ENCODE measurements at regions of chr7 and their contacts with region 1.

Region 1: GRCh38 chr7:102440078-102440795 is 6.9 kb downstream of the ORAI2 start:
- DNase-seq: no peak
- ATAC-seq: no peak
- H3K4me3 ChIP-seq: no peak overlapping the region
- H3K4me3 Mint-ChIP-seq: no peak overlapping the region
- H3K27ac ChIP-seq: peak overlapping the region; percentile 90
- H3K27ac Mint-ChIP-seq: no peak overlapping the region
- H3K4me1 ChIP-seq: peaks cover 52 to 76% of the 10 kb centered on the region in 2 donors
- H3K4me1 Mint-ChIP-seq: peaks cover 54% of the 10 kb centered on the region
- H3K27me3 ChIP-seq: no peaks in the 10 kb centered on the region
- H3K27me3 Mint-ChIP-seq: no peaks in the 10 kb centered on the region
- CTCF ChIP-seq: no peak

Region 2: DNA sequence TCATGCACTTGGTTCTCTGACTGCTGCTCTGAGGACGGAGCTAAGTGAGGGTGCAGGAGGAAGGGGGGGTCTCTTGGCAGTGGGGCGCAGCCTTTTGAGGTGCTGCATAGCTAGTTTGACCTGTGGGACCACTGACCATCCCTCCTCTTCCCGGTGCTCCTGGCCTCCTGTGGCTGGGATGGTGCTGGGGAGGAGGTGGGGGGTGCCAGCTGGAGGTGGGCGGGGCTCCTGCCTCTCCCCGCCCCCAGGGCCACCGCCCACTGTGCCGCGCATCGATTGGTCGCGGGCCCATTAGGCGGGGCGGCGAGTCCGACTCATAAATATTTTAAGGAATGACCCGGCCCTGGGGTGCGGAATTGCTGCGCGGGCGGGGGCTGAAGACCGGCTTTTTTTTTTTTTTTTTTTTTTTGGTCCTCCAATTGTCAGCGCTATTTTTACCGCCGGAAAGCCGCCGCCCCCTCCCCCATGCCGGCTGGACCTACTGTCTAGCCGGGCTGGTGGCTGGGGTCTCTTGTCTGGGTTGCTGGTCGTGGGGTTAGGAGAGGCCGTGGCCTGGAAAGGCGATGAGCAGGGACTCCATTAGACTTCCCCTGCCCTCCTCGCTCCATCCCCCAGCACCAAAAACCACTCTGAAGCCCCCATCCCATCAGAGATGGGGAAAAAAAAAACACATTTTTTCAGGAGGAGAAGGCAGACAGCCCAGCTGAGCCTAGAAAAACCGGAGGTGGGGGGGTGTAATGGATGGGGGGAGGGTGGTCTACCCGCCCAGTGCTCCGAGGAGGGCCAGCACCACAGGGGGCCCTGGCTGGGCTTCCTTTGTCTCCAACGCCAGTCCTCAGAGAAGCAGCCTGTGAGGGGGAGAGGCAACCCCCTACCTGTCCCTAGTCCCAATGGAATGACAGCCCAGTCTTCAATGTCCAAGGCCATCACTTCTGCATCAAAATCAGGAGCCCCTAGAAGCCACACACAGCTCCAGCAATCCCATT is 147.1 kb before region 1 on chr7:
- CTCF ChIA-PET with region 1: no interaction called
- POLR2A ChIA-PET with region 1: interaction called, 11 read pairs
- intact Hi-C with region 1: no loop called
- DNase-seq: no peak
- ATAC-seq: no peak
- H3K4me3 ChIP-seq: peak overlapping the region in 1 of 5 experiments; percentile 29
- H3K4me3 Mint-ChIP-seq: no peak overlapping the region
- H3K27ac ChIP-seq: peak overlapping the region in 1 of 2 donors; percentile 56
- H3K27ac Mint-ChIP-seq: no peak overlapping the region
- H3K4me1 ChIP-seq: peaks cover 75 to 85% of the 10 kb centered on the region in 2 donors
- H3K4me1 Mint-ChIP-seq: peaks cover 88% of the 10 kb centered on the region
- H3K27me3 ChIP-seq: no peaks in the 10 kb centered on the region
- H3K27me3 Mint-ChIP-seq: no peaks in the 10 kb centered on the region
- CTCF ChIP-seq: no peak

Region 3: DNA sequence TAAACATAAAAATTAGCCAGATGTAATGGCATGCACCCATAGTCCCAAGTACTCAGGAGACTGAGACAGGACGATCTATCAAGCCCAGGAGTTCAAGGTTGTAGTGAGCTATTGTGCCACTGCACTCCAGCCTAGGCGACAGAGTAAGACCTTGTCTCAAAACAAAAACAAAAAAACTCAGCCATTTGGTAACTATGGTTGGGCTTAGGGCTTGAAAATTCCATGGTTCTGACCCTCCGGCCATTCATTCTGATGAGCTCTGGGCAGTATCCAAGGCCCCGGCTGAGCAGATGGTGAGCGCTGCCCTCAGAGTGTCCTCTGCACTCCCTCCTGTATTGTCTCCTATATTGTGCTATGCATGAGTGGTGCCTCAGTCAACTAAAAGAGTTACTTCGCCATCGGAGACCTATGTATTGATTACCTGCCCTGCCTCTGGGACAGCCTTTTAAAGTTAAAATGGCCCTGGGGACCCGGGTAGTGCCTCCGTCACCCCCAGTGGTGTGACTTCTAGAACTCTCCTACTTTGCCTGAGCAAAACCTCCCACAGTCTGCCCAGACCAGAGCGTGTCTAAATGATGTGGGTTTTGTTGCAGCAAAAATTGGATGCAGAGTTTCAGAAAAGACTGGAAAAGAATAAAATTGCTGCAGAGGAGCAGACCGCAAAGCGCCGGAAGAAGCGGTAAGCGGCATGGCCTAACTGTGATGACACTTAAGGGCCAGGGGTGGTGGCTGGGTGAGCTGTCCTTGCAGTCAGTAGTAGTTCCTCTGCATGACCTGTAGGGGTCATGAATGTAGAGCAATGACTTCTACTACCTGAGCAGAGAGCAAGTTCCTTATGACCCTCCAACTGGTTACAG is 36.0 kb before region 1 on chr7:
- CTCF ChIA-PET with region 1: interaction called, 1,182 read pairs
- POLR2A ChIA-PET with region 1: interaction called, 69 read pairs
- intact Hi-C with region 1: loop called (anchors 1 kb)
- DNase-seq: peak; percentile 81
- ATAC-seq: peak; percentile 86
- H3K4me3 ChIP-seq: no peak overlapping the region
- H3K4me3 Mint-ChIP-seq: no peak overlapping the region
- H3K27ac ChIP-seq: no peak overlapping the region
- H3K27ac Mint-ChIP-seq: no peak overlapping the region
- H3K4me1 ChIP-seq: peaks cover 20 to 28% of the 10 kb centered on the region in 2 donors
- H3K4me1 Mint-ChIP-seq: peaks cover 36% of the 10 kb centered on the region
- H3K27me3 ChIP-seq: no peaks in the 10 kb centered on the region
- H3K27me3 Mint-ChIP-seq: no peaks in the 10 kb centered on the region
- CTCF ChIP-seq: peak; percentile 87

Region 4: GRCh38 chr7:102412548-102412947 is 27.7 kb before region 1 on chr7:
- CTCF ChIA-PET with region 1: interaction called, 1,182 read pairs
- POLR2A ChIA-PET with region 1: interaction called, 223 read pairs
- intact Hi-C with region 1: loop called (anchors 1 kb)
- DNase-seq: peak; percentile 67
- ATAC-seq: no peak
- H3K4me3 ChIP-seq: no peak overlapping the region
- H3K4me3 Mint-ChIP-seq: no peak overlapping the region
- H3K27ac ChIP-seq: no peak overlapping the region
- H3K27ac Mint-ChIP-seq: peak overlapping the region; percentile 34
- H3K4me1 ChIP-seq: peaks cover 58 to 76% of the 10 kb centered on the region in 2 donors
- H3K4me1 Mint-ChIP-seq: peaks cover 77% of the 10 kb centered on the region
- H3K27me3 ChIP-seq: no peaks in the 10 kb centered on the region
- H3K27me3 Mint-ChIP-seq: no peaks in the 10 kb centered on the region
- CTCF ChIP-seq: peak; percentile 68

Region 5: GRCh38 chr7:102425639-102426267 is 14.5 kb before region 1 on chr7:
- CTCF ChIA-PET with region 1: interaction called, 1,182 read pairs
- POLR2A ChIA-PET with region 1: interaction called, 223 read pairs
- intact Hi-C with region 1: loop called (anchors 1 kb)
- DNase-seq: peak; percentile 95
- ATAC-seq: peak; percentile 76
- H3K4me3 ChIP-seq: peak overlapping the region; percentile 30 to 48 (median 39)
- H3K4me3 Mint-ChIP-seq: peak overlapping the region; percentile 87
- H3K27ac ChIP-seq: peak overlapping the region; percentile 100
- H3K27ac Mint-ChIP-seq: peak overlapping the region; percentile 100
- H3K4me1 ChIP-seq: peaks cover 94 to 99% of the 10 kb centered on the region in 2 donors
- H3K4me1 Mint-ChIP-seq: peaks cover 79% of the 10 kb centered on the region
- H3K27me3 ChIP-seq: no peaks in the 10 kb centered on the region
- H3K27me3 Mint-ChIP-seq: no peaks in the 10 kb centered on the region
- CTCF ChIP-seq: no peak

Region 6: DNA sequence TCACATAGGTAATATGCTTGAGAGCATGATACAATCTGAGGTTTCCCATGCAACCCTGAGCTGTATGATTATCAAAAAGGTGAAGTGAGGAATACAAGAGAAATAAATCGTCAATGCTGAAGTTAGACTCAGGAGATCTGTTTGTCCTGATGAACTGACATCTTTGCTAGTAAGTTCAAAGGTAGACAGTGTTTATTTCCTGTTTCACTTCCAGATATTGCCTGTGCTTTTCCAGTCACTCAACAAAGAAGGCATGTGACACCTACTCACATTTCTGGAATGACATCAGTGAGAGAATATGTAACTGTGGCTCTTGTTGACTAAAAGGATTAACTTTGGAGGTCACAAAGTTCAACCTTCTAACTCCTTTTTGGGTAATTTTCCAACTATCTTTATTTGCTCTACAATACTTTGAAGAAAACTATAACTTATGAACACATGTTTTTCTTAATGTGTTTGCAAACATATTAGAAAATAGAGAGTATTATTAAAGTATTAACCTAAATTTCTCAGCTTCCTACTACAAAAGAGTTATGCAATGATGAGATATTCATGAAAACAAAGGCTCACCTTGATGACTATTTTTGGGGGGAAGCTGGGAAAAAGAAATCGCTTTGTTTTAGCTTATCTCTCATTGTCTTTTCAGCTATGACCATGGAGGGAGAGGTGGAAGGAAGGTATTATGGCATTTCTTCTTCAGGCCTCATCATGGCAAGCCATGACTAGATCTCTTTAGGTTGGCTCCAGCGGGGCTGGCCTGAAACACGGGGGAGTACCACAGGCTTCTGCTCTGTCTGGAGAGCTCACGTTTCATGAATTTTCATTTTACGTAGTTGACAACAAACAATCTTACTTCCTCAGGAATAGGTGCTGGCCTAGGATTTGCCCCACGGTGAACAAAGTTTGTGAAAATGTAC is 1220.5 kb after region 1 on chr7:
- CTCF ChIA-PET with region 1: no interaction called
- POLR2A ChIA-PET with region 1: no interaction called
- intact Hi-C with region 1: no loop called
- DNase-seq: no peak
- ATAC-seq: no peak
- H3K4me3 ChIP-seq: no peak overlapping the region
- H3K4me3 Mint-ChIP-seq: no peak overlapping the region
- H3K27ac ChIP-seq: no peak overlapping the region
- H3K27ac Mint-ChIP-seq: no peak overlapping the region
- H3K4me1 ChIP-seq: no peaks in the 10 kb centered on the region
- H3K4me1 Mint-ChIP-seq: no peaks in the 10 kb centered on the region
- H3K27me3 ChIP-seq: no peaks in the 10 kb centered on the region
- H3K27me3 Mint-ChIP-seq: no peaks in the 10 kb centered on the region
- CTCF ChIP-seq: no peak